ENCODE measurements at regions of chr15 and their contacts with region 1.

Region 1: GRCh38 chr15:38563723-38564519 is 693 bp downstream of the RASGRP1 start:
- DNase-seq: peak; percentile 89
- H3K4me3 Mint-ChIP-seq: peak overlapping the region; percentile 92
- H3K27ac Mint-ChIP-seq: peak overlapping the region; percentile 92
- H3K4me1 Mint-ChIP-seq: peaks cover 52% of the 10 kb centered on the region
- H3K27me3 Mint-ChIP-seq: no peaks in the 10 kb centered on the region

Region 2: GRCh38 chr15:38538372-38539343 is 25.3 kb before region 1 on chr15:
- CTCF ChIA-PET with region 1: interaction called, 6 read pairs
- POLR2A ChIA-PET with region 1: interaction called, 10 read pairs
- DNase-seq: no peak
- H3K4me3 Mint-ChIP-seq: peak overlapping the region; percentile 49
- H3K27ac Mint-ChIP-seq: peak overlapping the region; percentile 79
- H3K4me1 Mint-ChIP-seq: peaks cover 94% of the 10 kb centered on the region
- H3K27me3 Mint-ChIP-seq: no peaks in the 10 kb centered on the region

Region 3: DNA sequence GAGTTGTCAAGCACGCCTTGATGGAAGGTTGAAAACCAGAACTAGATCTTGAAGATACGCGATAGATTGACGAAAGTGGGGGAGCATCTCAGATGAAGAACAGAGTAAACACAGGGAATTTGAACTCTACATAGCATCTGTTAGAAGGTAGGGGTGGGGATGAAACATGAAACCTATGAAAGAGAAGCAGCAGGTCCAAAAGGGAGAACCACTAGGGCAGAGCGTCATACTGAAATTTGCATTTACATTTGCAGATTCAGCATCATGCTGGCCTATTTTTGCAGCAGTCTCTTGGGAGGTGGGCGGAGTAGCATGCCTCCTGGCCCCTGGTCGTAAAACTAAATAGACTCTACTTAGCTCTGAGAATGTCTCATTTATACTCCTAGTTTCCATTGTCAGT is 46.8 kb after region 1 on chr15:
- CTCF ChIA-PET with region 1: interaction called, 99 read pairs
- POLR2A ChIA-PET with region 1: interaction called, 243 read pairs
- DNase-seq: peak; percentile 65
- H3K4me3 Mint-ChIP-seq: peak overlapping the region; percentile 61
- H3K27ac Mint-ChIP-seq: peak overlapping the region; percentile 99
- H3K4me1 Mint-ChIP-seq: peaks cover 71% of the 10 kb centered on the region
- H3K27me3 Mint-ChIP-seq: no peaks in the 10 kb centered on the region

Region 4: DNA sequence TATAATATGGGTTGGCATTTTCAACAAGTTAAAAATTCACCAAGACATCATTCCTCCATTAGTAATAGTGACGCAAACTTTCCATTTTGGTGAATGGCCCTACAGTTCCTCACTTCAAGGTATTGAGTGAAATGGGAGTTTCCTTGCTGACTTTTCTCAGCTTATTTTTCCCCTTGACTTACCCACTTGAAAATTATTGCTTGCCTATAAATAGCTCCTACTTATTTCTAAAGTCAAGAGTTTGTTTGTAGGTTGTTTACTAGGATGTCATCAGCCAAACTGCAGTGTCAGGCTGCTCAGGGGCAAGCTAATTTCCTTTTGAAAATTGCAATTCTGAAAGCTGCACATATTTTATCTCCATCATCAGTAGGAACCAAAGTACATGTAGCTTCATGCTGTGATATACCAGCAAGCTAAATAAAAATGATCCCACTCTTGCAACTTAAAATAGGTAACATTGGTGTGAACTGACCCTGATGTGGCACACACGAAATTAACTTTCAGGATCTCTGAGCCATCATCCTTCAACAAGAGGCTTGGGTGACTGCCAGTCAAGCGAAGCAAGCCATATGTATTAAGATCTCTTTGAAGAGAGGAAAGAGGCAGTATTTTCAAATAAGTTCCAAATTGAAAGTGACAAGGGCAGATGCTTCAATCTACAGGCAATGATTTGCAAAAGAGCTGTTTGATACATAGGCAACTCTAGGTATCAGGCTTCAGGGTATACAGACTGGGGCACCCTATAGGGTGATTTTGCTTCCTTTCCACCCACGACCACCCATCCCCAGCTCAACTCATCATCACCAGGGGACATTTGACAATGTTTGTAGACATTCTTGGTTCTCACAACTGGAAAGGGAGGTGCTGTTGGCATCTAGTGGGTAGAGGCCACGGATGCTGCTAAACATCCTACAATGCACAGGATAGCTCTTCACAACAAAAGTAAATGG is 67.5 kb after region 1 on chr15:
- CTCF ChIA-PET with region 1: interaction called, 24 read pairs
- POLR2A ChIA-PET with region 1: interaction called, 22 read pairs
- DNase-seq: no peak
- H3K4me3 Mint-ChIP-seq: no peak overlapping the region
- H3K27ac Mint-ChIP-seq: peak overlapping the region; percentile 61
- H3K4me1 Mint-ChIP-seq: peaks cover 25% of the 10 kb centered on the region
- H3K27me3 Mint-ChIP-seq: no peaks in the 10 kb centered on the region

Region 5: GRCh38 chr15:38660738-38661137 is 96.8 kb after region 1 on chr15:
- CTCF ChIA-PET with region 1: interaction called, 224 read pairs
- POLR2A ChIA-PET with region 1: interaction called, 495 read pairs
- DNase-seq: peak; percentile 37
- H3K4me3 Mint-ChIP-seq: peak overlapping the region; percentile 26
- H3K27ac Mint-ChIP-seq: peak overlapping the region; percentile 61
- H3K4me1 Mint-ChIP-seq: peaks cover 62% of the 10 kb centered on the region
- H3K27me3 Mint-ChIP-seq: no peaks in the 10 kb centered on the region

Region 6: DNA sequence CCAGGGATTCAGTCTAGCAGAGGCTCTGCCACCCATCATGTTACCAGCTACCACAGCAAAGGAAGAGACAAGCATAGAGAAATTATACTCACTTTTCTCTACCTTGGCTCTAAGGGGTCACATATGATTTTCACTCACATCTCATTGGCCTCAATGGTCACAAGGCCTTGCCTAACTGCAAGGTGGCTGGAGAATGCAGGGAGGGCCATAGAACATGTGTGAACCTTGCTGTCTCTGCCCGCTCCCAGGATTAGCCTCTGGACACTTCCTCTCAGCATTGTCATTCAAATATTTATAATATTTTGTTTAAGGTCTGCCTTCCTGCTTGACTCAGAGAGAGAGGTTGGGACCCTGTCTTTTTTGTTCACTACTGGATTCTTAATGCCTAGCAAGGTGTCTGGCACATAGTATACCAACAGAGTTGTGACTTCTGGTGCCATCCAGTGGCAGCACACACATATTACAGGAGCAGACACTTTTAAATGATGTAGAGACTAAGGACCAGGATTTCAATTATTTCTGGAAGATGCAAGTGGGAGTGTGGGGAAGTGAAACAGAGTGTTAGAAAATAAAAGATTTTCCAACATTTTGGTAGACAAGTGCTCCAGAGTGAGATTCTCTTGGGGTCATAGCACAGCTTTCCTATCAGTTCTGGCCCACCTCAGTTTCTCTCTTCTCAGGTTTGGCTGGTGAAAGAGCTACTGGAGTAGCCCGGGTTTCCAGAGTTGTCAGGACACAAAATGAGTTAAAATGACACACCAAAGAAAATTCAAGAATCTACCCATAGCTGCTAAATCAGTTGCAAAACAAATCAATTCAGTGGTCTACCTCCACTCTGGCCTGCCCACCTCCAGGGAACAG is 119.7 kb after region 1 on chr15:
- CTCF ChIA-PET with region 1: interaction called, 731 read pairs
- POLR2A ChIA-PET with region 1: interaction called, 1,063 read pairs
- DNase-seq: peak; percentile 81
- H3K4me3 Mint-ChIP-seq: peak overlapping the region; percentile 54
- H3K27ac Mint-ChIP-seq: peak overlapping the region; percentile 99
- H3K4me1 Mint-ChIP-seq: peaks cover 75% of the 10 kb centered on the region
- H3K27me3 Mint-ChIP-seq: no peaks in the 10 kb centered on the region